Endothelial cell of umbilical vein (primary cell): ENCODE measurements at regions of chr2 and their contacts with region 1.

Region 1: GRCh38 chr2:96509114-96509846 is 4.1 kb upstream of the NEURL3 start:
- DNase-seq: peak; percentile 78
- H3K4me3 ChIP-seq: no peak overlapping the region
- H3K27ac ChIP-seq: no peak overlapping the region
- H3K4me1 ChIP-seq: no peaks in the 10 kb centered on the region
- H3K27me3 ChIP-seq: peaks cover 2 to 3% of the 10 kb centered on the region in 2 experiments
- CTCF ChIP-seq: peak; percentile 99
- POLR2A ChIP-seq: no peak

Region 2: GRCh38 chr2:96099861-96100798 is 409.1 kb before region 1 on chr2:
- CTCF ChIA-PET with region 1: no interaction called
- POLR2A ChIA-PET with region 1: no interaction called
- dilution Hi-C with region 1: no loop called
- intact Hi-C with region 1: no loop called
- DNase-seq: peak; percentile 26
- H3K4me3 ChIP-seq: no peak overlapping the region
- H3K27ac ChIP-seq: no peak overlapping the region
- H3K4me1 ChIP-seq: no peaks in the 10 kb centered on the region
- H3K27me3 ChIP-seq: peaks cover 0 to 2% of the 10 kb centered on the region in 2 experiments
- CTCF ChIP-seq: no peak
- POLR2A ChIP-seq: no peak

Region 3: DNA sequence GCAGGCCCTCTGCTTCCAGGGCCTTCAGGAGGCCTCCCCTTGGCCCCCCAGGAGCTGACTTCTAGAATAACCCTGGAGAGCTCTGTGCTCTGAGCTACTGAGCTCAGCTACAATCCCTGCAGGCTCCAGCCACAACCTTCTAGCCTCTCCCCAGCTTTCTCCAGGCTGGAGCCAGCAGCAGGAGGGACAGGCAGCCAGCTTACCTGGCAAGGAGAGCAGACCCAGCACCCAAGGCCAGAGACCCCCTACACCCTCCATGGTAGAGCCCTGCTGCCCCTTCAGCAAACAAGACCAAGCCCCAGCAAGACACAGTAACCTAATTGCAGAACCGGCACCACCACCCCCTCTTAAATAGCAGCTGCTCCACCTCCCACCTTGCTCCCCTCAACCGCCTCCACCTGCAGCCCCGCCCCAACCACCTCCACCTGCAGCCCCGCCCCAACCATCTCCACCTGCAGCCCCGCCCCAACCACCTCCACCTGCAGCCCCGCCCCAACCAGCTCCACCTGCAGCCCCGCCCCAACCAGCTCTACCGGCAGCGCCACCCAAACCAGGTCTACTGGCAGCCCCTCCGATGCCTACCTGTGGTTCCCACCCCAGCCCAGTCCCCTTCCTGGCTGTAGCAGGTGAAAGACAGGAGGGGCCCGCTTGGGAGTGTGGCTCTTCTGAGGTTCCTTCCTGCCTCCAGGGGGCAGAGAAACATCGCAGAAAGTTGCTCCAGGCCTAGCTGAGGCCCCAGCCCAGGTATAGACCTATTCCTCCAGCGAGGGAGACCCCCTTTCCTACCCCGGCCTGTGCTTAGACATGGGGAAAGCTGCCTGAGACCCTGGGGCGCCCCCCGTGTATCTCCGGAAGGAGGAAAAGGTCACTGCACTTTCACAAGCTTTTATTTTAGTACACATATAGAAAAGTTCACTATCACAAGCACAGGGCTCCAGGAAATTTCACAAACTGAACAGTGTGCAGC is 370.8 kb before region 1 on chr2 and contains the start of gene ASTL:
- CTCF ChIA-PET with region 1: interaction called, 5 read pairs
- POLR2A ChIA-PET with region 1: no interaction called
- dilution Hi-C with region 1: no loop called
- intact Hi-C with region 1: loop called (anchors 2 kb)
- DNase-seq: peak; percentile 19
- H3K4me3 ChIP-seq: no peak within 1 kb of the TSS
- H3K27ac ChIP-seq: no peak within 1 kb of the TSS
- H3K4me1 ChIP-seq: no peaks in the 10 kb centered on the region
- H3K27me3 ChIP-seq: peaks cover 0 to 3% of the 10 kb centered on the region in 2 experiments
- CTCF ChIP-seq: peak; percentile 26 to 68
- POLR2A ChIP-seq: no peak
- total RNA-seq, gene ASTL: not detected in 2 replicates

Region 4: GRCh38 chr2:96208143-96209010 is 300.9 kb before region 1 on chr2 and contains the start of gene STARD7:
- CTCF ChIA-PET with region 1: no interaction called
- POLR2A ChIA-PET with region 1: no interaction called
- dilution Hi-C with region 1: no loop called
- intact Hi-C with region 1: loop called (anchors 10 kb)
- DNase-seq: peak; percentile 97
- H3K4me3 ChIP-seq: peak within 1 kb of the TSS; percentile 84 to 99 (median 98)
- H3K27ac ChIP-seq: peak within 1 kb of the TSS; percentile 87
- H3K4me1 ChIP-seq: peaks cover 36% of the 10 kb centered on the region
- H3K27me3 ChIP-seq: no peaks in the 10 kb centered on the region
- CTCF ChIP-seq: peak; percentile 4 to 19
- POLR2A ChIP-seq: peak; percentile 89
- total RNA-seq, gene STARD7: 107 and 132 TPM in 2 replicates

Region 5: GRCh38 chr2:96359310-96359709 is 150.0 kb before region 1 on chr2:
- CTCF ChIA-PET with region 1: interaction called, 3 read pairs
- POLR2A ChIA-PET with region 1: no interaction called
- dilution Hi-C with region 1: no loop called
- intact Hi-C with region 1: loop called (anchors 5 kb)
- DNase-seq: no peak
- H3K4me3 ChIP-seq: no peak overlapping the region
- H3K27ac ChIP-seq: no peak overlapping the region
- H3K4me1 ChIP-seq: no peaks in the 10 kb centered on the region
- H3K27me3 ChIP-seq: no peaks in the 10 kb centered on the region
- CTCF ChIP-seq: no peak
- POLR2A ChIP-seq: no peak

Region 6: DNA sequence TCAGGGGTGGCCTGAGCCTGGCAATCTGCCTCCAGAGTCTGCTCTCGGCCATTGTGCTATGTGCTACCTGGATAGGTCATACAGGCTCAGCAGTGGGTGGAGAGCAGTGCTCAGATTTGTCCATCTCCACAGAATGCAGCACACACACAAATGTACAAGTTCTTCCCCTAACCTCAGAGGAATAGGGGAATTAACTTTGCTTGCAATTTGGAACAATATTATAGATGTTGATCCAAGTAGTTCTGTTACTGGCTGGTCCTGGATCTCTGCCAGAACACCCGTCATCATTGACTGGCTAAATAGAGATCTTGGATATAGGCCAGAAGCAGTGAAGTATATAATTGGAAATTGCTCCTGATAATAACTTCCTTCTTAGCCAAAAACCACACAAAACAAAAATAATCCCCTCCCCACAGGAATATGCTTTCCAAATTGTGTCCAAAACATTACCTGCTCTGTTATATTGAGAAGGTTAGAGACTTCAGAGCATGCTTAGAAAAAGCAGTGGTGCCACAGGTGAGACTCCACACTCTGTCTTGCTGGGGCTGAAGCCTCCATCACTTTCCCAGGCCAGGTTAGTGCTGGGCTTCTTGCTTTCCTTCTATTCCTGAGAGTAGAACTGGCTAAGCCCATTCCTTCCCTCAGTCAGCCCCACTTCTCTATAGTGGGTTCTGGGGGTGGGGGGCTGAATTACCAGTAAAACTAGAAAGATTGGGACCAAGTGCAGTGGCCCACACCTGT is 134.9 kb before region 1 on chr2:
- CTCF ChIA-PET with region 1: no interaction called
- POLR2A ChIA-PET with region 1: no interaction called
- dilution Hi-C with region 1: no loop called
- intact Hi-C with region 1: no loop called
- DNase-seq: peak; percentile 79
- H3K4me3 ChIP-seq: no peak overlapping the region
- H3K27ac ChIP-seq: no peak overlapping the region
- H3K4me1 ChIP-seq: no peaks in the 10 kb centered on the region
- H3K27me3 ChIP-seq: no peaks in the 10 kb centered on the region
- CTCF ChIP-seq: no peak
- POLR2A ChIP-seq: no peak

Region 7: DNA sequence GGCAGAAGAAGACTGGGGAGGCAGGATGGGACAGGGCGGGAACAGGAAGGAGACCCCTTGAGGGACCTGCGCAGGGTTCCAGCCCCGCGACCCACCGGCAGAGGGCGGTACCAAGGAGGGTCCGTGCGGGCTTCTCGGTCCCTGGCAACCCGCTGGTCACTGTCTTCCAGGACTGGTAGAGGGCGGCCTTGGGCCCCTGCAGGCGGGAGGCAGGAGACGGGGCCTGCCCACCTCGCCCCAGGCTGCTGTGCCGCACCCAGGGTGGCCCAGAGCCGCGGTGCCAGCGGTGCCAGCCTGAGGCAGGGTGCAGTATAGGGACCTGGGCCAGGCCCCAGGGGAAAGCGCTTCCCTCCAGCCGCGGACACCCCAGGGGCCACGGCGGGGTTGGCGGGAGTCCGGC is 38.6 kb before region 1 on chr2:
- CTCF ChIA-PET with region 1: interaction called, 33 read pairs
- POLR2A ChIA-PET with region 1: no interaction called
- dilution Hi-C with region 1: no loop called
- intact Hi-C with region 1: loop called (anchors 1 kb)
- DNase-seq: peak; percentile 54
- H3K4me3 ChIP-seq: no peak overlapping the region
- H3K27ac ChIP-seq: no peak overlapping the region
- H3K4me1 ChIP-seq: no peaks in the 10 kb centered on the region
- H3K27me3 ChIP-seq: peaks cover under 1 to 5% of the 10 kb centered on the region in 2 experiments
- CTCF ChIP-seq: peak; percentile 72 to 92
- POLR2A ChIP-seq: no peak

Region 8: DNA sequence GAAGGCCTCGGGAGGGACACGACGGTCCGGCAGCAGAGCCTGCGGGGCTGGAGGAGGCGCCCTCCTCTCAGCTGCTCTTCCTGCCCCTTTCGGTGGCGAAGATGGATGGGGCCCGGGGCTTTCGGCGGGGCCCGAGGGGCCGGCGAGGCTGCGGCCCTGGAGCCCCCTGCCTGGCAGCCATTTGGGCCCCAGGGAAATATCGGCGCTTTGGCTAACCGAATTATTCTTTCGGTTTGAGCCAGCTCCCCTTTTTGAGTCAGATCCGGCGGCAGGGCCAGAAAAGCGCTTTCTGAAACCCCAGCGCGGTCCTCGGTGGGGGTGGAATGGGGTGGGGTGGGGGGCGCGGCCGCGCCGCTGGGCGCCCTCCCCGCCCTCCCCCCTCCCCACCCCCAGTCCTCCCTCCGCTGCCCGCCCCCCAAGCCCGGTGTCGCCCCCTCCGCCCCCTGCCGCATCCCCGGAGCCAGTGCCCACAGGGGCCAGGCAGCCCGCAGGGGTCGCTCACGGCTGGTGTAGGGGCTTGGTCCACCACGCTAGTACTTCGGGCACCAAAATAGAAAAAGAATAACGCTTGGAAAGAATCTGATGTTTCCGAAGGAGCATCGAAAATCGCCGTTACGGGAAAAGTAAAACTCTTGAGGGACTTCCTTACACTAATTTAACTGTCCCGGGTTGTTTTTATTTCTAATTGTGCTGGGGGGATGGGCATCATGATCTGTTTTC is 18.2 kb after region 1 on chr2:
- CTCF ChIA-PET with region 1: interaction called, 28 read pairs
- POLR2A ChIA-PET with region 1: no interaction called
- dilution Hi-C with region 1: no loop called
- intact Hi-C with region 1: loop called (anchors 1 kb)
- DNase-seq: peak; percentile 58
- H3K4me3 ChIP-seq: peak overlapping the region; percentile 17 to 53 (median 50)
- H3K27ac ChIP-seq: peak overlapping the region; percentile 77
- H3K4me1 ChIP-seq: peaks cover 33% of the 10 kb centered on the region
- H3K27me3 ChIP-seq: no peaks in the 10 kb centered on the region
- CTCF ChIP-seq: peak; percentile 12 to 64
- POLR2A ChIP-seq: no peak

Region 9: GRCh38 chr2:96625571-96626552 is 116.6 kb after region 1 on chr2:
- CTCF ChIA-PET with region 1: no interaction called
- POLR2A ChIA-PET with region 1: no interaction called
- dilution Hi-C with region 1: no loop called
- intact Hi-C with region 1: no loop called
- DNase-seq: peak; percentile 57
- H3K4me3 ChIP-seq: no peak overlapping the region
- H3K27ac ChIP-seq: peak overlapping the region; percentile 70
- H3K4me1 ChIP-seq: peaks cover 19% of the 10 kb centered on the region
- H3K27me3 ChIP-seq: no peaks in the 10 kb centered on the region
- CTCF ChIP-seq: no peak
- POLR2A ChIP-seq: no peak

Region 10: DNA sequence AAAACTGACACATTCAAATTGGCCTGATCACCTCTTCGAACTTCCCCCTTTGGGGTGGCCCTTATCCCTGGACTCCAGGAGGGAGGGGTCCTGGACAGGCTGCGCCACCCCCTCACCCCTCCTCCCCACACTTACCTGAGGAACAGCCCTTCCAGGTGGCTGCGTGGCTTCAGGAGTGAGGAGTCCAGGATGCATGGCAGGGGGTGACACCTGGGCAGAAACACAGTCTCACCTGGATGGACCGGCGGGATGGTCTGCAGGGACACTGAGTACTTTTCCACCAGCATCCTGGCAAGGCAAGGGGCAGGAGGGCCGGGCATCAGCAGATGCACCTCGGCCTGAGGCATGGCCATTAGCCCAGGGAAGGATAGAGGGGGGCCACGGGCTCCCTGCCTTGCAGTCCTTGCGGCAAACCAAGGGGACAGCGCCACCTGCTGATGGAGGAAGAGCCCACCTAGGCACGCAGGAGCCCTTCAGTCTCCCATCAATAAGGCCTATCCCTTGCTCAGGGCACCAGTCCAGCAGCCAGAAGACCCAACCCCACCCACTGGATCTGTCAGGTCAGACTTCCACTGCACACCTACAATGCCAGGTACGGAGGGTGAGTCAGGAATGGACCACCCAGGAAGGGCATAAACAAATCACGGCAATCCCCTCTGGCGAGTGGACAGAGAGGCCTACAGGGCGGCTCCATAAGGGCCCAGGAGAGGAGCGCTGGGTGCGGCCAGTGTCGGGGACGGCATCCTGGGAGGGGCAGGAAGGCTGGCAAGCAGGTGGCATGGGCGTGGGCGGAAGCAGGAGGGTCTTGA is 451.1 kb after region 1 on chr2:
- CTCF ChIA-PET with region 1: no interaction called
- POLR2A ChIA-PET with region 1: no interaction called
- dilution Hi-C with region 1: no loop called
- intact Hi-C with region 1: loop called (anchors 1 kb)
- DNase-seq: peak; percentile 73
- H3K4me3 ChIP-seq: no peak overlapping the region
- H3K27ac ChIP-seq: no peak overlapping the region
- H3K4me1 ChIP-seq: no peaks in the 10 kb centered on the region
- H3K27me3 ChIP-seq: no peaks in the 10 kb centered on the region
- CTCF ChIP-seq: peak; percentile 76 to 96
- POLR2A ChIP-seq: no peak